AG04449 (cell line): ENCODE measurements at regions of chr14 and their contacts with region 1.

Region 1: GRCh38 chr14:53539489-53540126 is 386.5 kb upstream of the DDHD1 start:
- DNase-seq: no peak
- H3K4me3 ChIP-seq: no peak overlapping the region
- CTCF ChIP-seq: peak; percentile 82

Region 2: DNA sequence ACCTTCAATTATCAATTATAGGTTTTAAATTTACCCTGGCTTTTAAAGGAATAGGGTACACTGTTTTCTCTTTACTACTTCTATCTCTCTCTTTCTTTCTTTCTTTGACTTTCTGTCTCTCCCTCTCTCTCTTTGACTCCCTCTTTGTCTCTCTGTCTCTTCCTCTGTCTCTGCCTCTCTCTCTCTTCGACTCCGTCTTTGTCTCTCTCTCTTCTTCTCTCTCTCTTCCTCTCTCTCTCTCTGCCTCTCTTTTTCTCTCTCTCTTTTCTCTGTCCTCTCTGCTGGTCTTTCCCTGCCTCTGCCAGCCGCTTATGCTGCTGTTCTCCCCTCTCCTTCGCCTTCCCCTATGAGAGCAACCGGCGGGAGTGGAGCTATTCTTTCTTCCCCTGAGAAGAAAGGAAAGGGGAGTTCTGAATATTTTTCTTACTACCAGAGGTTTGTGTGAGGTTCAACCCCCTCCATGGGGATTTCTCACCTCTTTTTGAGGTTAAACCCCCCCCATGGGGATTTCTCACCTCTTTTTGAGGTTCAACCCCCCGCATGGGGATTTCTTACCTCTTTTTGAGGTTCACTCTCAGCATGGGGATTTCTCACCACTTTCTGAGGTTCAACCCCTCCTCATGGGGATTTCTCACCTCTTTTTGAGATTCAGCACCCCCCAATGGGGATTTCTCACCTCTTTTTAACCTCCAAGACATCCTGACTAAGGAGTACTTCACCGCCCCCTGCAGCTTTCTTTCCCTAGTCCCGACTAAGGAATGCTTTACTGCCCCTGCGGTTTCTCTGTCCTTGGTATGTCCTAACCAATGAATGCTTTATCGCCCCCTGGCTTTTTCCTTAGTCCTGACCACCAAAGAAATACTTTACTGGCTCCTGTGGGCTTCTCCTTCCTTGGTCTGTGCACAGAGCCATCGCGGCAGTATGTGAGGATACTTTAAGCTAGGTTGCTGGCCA is 359.1 kb before region 1 on chr14:
- CTCF ChIA-PET with region 1: no interaction called
- POLR2A ChIA-PET with region 1: no interaction called
- DNase-seq: no peak
- H3K4me3 ChIP-seq: no peak overlapping the region
- CTCF ChIP-seq: no peak

Region 3: DNA sequence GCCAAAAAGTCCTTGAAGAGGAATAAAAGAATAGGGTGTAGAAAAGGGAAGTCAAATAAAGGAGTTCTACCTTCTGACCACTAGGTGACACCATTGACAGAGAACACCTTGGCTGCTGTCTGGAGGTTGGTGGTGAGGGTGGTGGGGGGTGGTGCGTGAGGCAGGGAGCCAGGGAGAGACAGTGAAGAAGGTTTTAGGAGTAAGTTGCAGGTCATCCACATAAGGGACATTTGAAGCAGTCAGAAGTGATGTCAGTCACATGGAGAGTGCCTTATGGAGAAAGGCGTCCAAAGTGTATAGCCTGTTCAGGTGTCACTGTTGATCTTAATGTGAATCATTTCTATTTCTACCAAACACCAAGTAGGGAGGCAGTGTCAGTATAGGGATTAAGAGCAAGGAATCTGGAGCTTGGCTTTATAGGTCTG is 107.2 kb before region 1 on chr14:
- CTCF ChIA-PET with region 1: interaction called, 50 read pairs
- POLR2A ChIA-PET with region 1: no interaction called
- DNase-seq: no peak
- H3K4me3 ChIP-seq: no peak overlapping the region
- CTCF ChIP-seq: peak; percentile 74

Region 4: GRCh38 chr14:53444677-53445312 is 94.8 kb before region 1 on chr14:
- CTCF ChIA-PET with region 1: no interaction called
- POLR2A ChIA-PET with region 1: no interaction called
- DNase-seq: no peak
- H3K4me3 ChIP-seq: no peak overlapping the region
- CTCF ChIP-seq: no peak

Region 5: DNA sequence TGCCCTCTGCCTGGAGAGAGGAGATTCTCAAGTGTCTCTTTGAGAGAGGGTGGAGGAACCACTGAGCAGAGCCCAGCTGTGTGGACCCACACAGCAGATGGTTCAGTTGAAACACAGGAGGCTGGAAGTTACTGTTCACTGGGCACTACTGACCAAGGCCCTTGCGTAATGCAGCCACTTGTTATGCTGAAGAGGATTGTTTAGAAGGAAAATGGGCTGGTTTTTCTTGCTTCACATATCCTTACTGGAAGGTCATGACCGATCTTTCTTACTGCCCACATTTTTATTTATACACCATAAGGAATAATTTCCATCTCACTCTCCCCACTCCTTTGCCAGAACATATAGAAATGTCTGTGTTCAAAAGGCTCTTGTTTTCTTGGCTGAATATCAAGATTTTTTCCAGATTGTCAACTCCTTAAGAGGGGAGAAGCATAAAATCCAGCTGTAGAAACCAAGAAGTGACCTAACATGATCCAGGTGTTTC is 11.4 kb before region 1 on chr14:
- CTCF ChIA-PET with region 1: interaction called, 70 read pairs
- POLR2A ChIA-PET with region 1: no interaction called
- DNase-seq: no peak
- H3K4me3 ChIP-seq: no peak overlapping the region
- CTCF ChIP-seq: no peak

Region 6: GRCh38 chr14:54175298-54175942 is 635.8 kb after region 1 on chr14:
- CTCF ChIA-PET with region 1: interaction called, 104 read pairs
- POLR2A ChIA-PET with region 1: no interaction called
- DNase-seq: no peak
- H3K4me3 ChIP-seq: no peak overlapping the region
- CTCF ChIP-seq: peak; percentile 61

Region 7: DNA sequence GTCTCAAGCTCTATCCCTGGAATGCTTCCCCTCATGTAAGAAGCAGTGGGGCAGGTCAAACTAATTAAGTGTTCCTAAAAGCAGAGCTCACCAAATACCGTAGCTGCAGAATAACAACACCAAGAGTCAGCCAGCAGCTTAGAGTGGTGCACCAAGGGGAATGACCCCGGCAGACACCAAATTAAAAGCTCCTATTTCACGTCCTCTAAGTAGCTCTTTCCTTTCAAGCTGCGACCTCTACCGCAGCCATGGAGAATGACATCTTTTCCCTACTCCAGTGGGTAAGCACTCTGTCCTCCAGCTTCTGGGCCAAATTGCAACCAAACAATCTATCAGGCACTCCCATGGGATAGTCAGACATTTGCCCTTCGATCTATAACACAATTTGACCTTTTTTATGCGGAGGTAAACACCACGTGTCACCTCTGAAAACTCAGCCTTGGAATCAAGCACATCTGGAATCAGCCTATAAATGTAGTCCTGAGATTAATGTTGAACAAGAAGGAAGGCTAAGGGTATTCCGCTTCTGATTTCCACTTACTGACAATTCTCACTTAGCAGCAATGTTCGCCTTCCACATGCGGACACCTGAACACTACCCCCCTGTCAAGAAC is 789.6 kb after region 1 on chr14:
- CTCF ChIA-PET with region 1: interaction called, 15 read pairs
- POLR2A ChIA-PET with region 1: no interaction called
- DNase-seq: peak; percentile 16
- H3K4me3 ChIP-seq: no peak overlapping the region
- CTCF ChIP-seq: peak; percentile 77

Region 8: DNA sequence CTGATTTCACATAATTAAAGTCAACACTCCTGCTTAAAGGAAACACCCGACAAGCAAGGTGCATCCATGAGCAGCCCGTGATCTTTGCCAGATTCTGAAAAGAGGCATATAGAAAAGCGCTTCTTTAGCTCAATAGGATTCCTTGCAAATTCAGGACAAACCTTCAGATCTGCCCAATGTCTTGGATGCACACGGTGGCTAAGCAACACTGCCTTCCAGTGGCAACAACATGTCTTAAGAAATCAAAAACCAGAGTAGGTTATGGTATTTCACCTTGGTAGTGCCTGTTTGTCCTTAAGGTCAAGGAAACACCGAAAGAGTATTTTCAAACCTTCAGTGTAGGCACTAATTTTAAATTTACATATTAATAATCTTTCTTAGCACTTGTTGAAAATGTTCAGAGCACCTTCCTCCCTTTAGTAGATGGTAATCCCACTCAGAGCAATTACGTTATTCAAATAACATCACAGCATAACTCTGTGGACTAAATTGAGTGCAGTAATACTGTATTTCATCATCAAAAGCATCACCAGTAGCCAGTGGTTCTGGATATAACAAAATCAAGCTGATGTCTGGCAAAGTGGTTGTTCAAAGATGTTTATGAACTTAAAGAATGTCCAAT is 799.2 kb after region 1 on chr14:
- CTCF ChIA-PET with region 1: interaction called, 52 read pairs
- POLR2A ChIA-PET with region 1: no interaction called
- DNase-seq: no peak
- H3K4me3 ChIP-seq: no peak overlapping the region
- CTCF ChIP-seq: peak; percentile 59